CD14-positive monocyte (primary cell): ENCODE measurements at regions of chr1 and their contacts with region 1.

Region 1: GRCh38 chr1:22089787-22090186 is 37.3 kb downstream of the CDC42 start:
- DNase-seq: no peak
- H3K4me3 ChIP-seq: peak overlapping the region in 1 of 3 experiments; percentile 37
- H3K4me3 Mint-ChIP-seq: peak overlapping the region in 1 of 2 donors; percentile 5
- H3K27ac ChIP-seq: peak overlapping the region; percentile 20 to 73
- H3K27ac Mint-ChIP-seq: peak overlapping the region; percentile 63 to 90 (median 83)
- H3K4me1 ChIP-seq: peaks cover 28 to 41% of the 10 kb centered on the region in 2 donors
- H3K4me1 Mint-ChIP-seq: peaks cover 44% of the 10 kb centered on the region
- H3K27me3 ChIP-seq: no peaks in the 10 kb centered on the region
- H3K27me3 Mint-ChIP-seq: no peaks in the 10 kb centered on the region
- CTCF ChIP-seq: no peak

Region 2: GRCh38 chr1:22052115-22053016 is 37.4 kb before region 1 on chr1 and contains the start of gene CDC42:
- intact Hi-C with region 1: loop called in 1 of 2 experiments (anchors 5 kb)
- DNase-seq: peak; percentile 94 to 97 (median 96)
- H3K4me3 ChIP-seq: peak within 1 kb of the TSS; percentile 88 to 99 (median 99)
- H3K4me3 Mint-ChIP-seq: peak within 1 kb of the TSS; percentile 91 to 96
- H3K27ac ChIP-seq: peak within 1 kb of the TSS; percentile 92 to 95
- H3K27ac Mint-ChIP-seq: peak within 1 kb of the TSS; percentile 93 to 98 (median 95)
- H3K4me1 ChIP-seq: peaks cover 69 to 73% of the 10 kb centered on the region in 2 donors
- H3K4me1 Mint-ChIP-seq: peaks cover 65% of the 10 kb centered on the region
- H3K27me3 ChIP-seq: no peaks in the 10 kb centered on the region
- H3K27me3 Mint-ChIP-seq: peaks cover 0 to 8% (median 0%) of the 10 kb centered on the region in 3 donors
- CTCF ChIP-seq: no peak
- polyA plus RNA-seq, gene CDC42: 210 to 731 (median 606) TPM